AG04450 (cell line): ENCODE measurements at regions of chr21 and their contacts with region 1.

Region 1: DNA sequence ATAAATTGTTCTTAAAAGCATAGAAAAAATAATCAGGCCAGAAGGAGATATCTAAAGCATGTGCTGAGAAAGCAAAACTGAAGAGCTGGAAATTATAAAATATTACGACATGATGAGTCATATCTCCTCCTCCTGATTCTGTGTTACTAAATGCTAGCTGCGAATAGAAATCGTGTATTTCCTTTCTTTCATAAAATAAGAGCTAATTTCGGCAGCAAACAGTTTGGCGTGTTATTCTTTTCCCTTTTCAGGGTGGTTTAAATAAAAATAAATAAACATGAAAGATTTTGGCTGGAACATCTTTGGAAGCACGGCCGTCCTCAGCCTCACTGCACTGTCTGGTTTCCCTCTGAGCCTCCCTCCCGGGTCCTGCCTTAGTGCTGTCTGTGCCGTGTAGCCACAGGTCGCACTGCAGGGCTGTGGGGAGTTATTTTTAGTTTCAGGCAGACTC is 56.0 kb downstream of the ADARB1 start:
- DNase-seq: no peak
- H3K4me3 ChIP-seq: peak overlapping the region; percentile 55
- H3K27ac ChIP-seq: peak overlapping the region; percentile 71
- H3K27me3 ChIP-seq: no peaks in the 10 kb centered on the region
- CTCF ChIP-seq: no peak

Region 2: DNA sequence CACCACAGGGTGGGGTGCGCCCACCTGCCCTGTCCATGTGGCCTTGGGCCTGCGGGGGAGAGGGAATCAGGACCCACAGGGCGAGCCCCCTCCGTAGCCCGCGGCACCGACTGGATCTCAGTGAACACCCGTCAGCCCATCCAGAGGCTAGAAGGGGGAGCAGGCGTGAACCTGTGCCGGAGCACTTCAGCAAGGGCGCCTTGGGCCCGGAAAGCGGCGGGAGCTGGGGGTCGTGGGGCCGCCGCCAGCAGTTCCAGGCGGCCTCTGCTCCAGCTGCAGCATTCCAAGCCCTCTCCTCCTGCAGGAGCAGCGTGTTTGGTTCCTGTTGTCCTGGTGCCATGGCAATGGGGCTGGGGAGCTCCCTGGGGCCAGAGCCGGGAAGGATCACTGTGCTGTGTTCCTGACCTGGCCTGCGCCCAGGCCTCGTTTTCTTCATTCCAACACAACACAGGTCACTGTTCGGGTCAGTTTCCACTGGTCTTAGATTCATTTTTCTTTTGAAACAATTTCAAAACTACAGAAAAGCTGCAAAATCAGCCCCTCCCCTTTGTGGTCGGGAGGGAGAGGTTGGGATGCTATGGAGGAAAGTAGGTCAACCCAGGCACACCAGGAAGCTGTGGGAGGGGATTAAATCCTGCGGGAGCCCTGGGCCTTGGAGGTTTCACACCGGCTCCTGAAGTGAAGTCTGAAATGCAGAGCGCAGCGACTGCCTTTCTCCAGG is 171.7 kb before region 1 on chr21:
- CTCF ChIA-PET with region 1: interaction called, 16 read pairs
- POLR2A ChIA-PET with region 1: interaction called, 5 read pairs
- DNase-seq: no peak
- H3K4me3 ChIP-seq: no peak overlapping the region
- H3K27ac ChIP-seq: no peak overlapping the region
- H3K27me3 ChIP-seq: no peaks in the 10 kb centered on the region
- CTCF ChIP-seq: no peak

Region 3: GRCh38 chr21:45102391-45102932 is 27.9 kb before region 1 on chr21:
- CTCF ChIA-PET with region 1: interaction called, 11 read pairs
- POLR2A ChIA-PET with region 1: no interaction called
- DNase-seq: no peak
- H3K4me3 ChIP-seq: no peak overlapping the region
- H3K27ac ChIP-seq: no peak overlapping the region
- H3K27me3 ChIP-seq: no peaks in the 10 kb centered on the region
- CTCF ChIP-seq: peak; percentile 31; the same call in 1 of the 2 replicates

Region 4: DNA sequence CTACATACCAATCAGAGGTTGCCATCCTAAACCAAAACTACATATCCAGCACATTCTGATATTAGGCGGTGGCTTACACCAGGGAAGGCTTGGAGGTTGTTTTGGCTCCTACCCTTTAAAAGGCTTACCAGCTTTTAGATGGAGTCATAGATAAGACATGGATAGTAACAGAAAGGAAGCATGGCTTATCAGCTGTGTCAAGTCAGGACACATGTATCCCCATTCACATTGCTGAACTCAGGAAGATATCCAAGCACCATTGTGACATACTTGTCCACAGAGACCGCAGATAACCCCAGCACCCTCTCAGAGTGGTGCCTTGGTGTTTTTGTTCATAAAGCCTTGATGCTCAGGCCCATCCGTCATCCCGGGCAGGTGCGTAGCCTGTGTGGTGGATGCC is 16.3 kb before region 1 on chr21:
- CTCF ChIA-PET with region 1: interaction called, 16 read pairs
- POLR2A ChIA-PET with region 1: no interaction called
- DNase-seq: no peak
- H3K4me3 ChIP-seq: no peak overlapping the region
- H3K27ac ChIP-seq: no peak overlapping the region
- H3K27me3 ChIP-seq: no peaks in the 10 kb centered on the region
- CTCF ChIP-seq: no peak

Region 5: GRCh38 chr21:45167796-45168222 is 37.5 kb after region 1 on chr21:
- CTCF ChIA-PET with region 1: no interaction called
- POLR2A ChIA-PET with region 1: no interaction called
- DNase-seq: no peak
- H3K4me3 ChIP-seq: no peak overlapping the region
- H3K27ac ChIP-seq: peak overlapping the region; percentile 84
- H3K27me3 ChIP-seq: no peaks in the 10 kb centered on the region
- CTCF ChIP-seq: peak; percentile 21; the same call in 1 of the 2 replicates